Activated B cell treated with CpG ODN at 0.5 μM for 24 hours (primary cell): ENCODE measurements at regions of chr12 and their contacts with region 1.

Region 1: DNA sequence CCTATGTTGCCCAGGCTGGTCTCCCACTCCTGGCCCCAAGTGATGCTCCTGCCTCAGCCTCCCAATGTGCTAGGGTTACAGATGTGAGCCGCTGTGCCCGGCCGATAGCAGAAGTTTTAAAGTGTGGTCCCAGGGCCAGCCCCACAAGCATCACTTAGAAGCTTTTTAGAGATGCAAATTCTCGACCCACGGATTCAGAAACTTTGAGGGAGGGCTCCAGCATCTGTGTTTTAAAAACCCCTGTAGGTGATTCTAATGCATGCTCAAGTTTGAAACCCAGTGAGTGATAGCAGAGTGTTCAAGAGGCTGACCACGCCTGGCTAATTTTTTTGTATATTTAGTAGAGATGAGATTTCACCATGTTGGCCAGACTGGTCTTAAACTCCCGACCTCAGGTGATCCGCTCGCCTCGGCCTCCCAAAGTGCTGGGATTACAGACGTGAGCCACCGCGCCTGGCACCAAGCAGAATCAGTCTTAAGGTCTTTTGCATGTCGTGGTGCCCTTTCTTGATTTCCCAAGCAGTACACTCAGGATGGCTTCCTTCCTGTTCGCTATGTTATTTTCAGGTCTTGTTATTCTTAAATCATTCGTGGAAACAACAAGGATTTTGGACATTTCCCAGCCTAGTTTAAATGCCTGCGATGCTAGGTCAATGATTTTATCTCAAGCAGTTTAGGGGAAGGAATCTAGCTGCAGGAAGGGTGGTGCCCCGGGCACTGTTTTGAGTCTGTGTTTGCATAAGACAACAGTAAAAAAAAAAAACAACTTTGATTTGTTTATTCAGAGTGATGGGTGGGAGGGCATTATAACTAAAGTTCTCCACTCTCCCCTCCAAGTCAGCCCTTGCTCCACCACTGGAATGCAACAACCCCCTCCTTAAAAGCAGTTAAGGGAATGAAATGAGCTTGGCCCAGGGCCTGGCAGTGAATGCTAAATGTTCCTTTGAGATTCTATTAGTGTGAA is 9.2 kb upstream of the RILPL2 start:
- DNase-seq: no peak
- ATAC-seq: peak; percentile 53
- H3K4me3 Mint-ChIP-seq: peak overlapping the region; percentile 75
- H3K27ac Mint-ChIP-seq: peak overlapping the region; percentile 93
- H3K4me1 Mint-ChIP-seq: peaks cover 59% of the 10 kb centered on the region
- H3K27me3 Mint-ChIP-seq: no peaks in the 10 kb centered on the region
- CTCF ChIP-seq: no peak

Region 2: GRCh38 chr12:123410041-123410412 is 35.6 kb before region 1 on chr12:
- CTCF ChIA-PET with region 1: no interaction called
- POLR2A ChIA-PET with region 1: interaction called, 16 read pairs
- intact Hi-C with region 1: no loop called
- DNase-seq: no peak
- ATAC-seq: no peak
- H3K4me3 Mint-ChIP-seq: no peak overlapping the region
- H3K27ac Mint-ChIP-seq: no peak overlapping the region
- H3K4me1 Mint-ChIP-seq: peaks cover 13% of the 10 kb centered on the region
- H3K27me3 Mint-ChIP-seq: no peaks in the 10 kb centered on the region
- CTCF ChIP-seq: no peak

Region 3: GRCh38 chr12:123457980-123458783 is 12.5 kb after region 1 on chr12 and contains the start of gene SNRNP35:
- CTCF ChIA-PET with region 1: no interaction called
- POLR2A ChIA-PET with region 1: interaction called, 77 read pairs
- intact Hi-C with region 1: loop called (anchors 1 kb)
- DNase-seq: peak; percentile 84
- ATAC-seq: peak; percentile 79
- H3K4me3 Mint-ChIP-seq: peak within 1 kb of the TSS; percentile 100
- H3K27ac Mint-ChIP-seq: peak within 1 kb of the TSS; percentile 100
- H3K4me1 Mint-ChIP-seq: peaks cover 33% of the 10 kb centered on the region
- H3K27me3 Mint-ChIP-seq: no peaks in the 10 kb centered on the region
- CTCF ChIP-seq: no peak
- total RNA-seq, gene SNRNP35: 39.5 and 51.5 TPM in 2 replicates